Posterior vena cava (tissue), 2 donors: ENCODE measurements at regions of chr1 and their contacts with region 1.

Region 1: DNA sequence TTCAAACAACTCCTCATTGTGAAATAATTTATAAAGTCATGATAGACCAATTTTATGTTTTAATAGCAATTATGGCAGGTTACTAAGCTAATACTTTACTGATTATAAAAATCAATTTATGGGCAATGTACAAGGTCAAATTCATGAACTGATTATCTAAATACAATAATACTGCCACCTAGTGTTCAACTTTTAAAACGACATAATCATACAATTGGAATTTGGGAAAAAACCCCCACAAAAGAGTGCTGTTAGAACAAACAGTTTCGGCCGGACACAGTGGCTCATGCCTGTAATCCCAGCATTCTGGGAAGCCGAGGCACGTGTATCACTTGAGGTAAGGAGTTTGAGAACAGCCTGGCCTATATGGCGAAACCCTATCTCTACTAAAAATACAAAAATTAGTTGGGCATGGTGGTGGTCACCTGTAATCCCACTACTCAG is 14.0 kb downstream of the GTF2B start:
- DNase-seq: no peak

Region 2: GRCh38 chr1:88189526-88189925 is 687.9 kb before region 1 on chr1:
- intact Hi-C with region 1: loop called in 1 of 2 experiments (anchors 5 kb)
- DNase-seq: no peak

Region 3: DNA sequence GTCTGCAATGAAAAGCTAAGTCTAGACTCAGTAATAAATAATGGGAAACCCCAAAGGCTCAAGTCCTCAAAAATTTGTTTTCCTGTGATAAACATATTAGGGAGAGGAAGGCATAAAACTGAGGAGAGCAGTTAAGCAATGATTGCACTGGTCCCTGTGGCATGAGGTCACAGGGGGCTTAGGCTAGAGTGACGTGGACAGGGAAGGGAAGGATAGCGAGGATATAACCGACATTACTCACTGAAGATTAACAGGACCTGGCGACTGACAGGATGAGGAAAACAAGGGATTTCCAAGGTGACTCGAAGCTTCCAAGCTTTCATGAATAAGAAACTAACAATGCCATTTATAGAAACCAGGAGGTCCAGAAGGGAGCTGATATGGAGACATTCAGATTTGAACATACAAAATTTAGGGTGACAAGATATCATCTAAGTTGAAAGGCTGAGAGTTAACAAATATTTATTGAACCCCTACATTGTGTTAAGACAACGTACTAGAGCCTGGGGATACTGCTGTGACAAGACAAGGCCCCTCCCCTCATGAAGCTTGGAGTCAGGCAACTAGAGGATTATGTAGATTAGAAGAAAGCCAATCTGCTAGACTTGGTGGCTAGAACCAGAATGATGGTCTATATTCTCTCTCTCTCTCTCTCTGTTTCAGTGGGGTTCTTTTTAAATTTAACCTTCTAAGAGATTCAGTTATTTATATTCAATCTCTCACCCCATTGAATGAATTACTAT is 226.6 kb before region 1 on chr1:
- intact Hi-C with region 1: loop called in 1 of 2 experiments (anchors 5 kb)
- DNase-seq: no peak

Region 4: DNA sequence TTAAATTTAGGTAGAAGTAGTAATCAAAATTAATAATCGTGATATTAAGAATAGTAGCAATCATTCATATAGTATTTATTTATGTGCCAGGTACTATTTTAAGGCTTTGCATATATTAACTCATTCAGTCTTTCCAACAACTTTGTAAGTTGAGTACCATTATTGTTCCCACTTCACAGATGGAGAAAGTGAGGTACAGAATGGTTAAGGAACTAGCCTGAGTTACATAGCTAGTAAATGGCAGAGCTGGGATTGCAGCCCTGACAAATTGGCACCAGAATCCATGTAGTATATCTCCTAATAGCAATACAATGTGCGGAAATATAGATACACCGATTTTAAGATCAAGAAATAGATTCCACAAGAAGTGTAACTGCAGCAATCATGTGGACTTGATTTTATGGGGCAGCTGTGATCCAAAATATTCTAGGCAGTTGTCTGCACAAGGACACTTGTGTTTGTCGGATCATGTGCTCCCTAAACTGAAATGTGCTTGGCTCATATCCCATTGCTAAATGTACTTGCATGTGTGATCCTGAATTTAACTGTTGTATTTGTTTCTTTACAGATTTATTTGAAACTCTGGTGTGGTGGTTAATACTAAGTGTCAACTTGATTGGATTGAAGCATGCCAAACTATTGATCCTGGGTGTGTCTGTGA is 19.8 kb after region 1 on chr1:
- intact Hi-C with region 1: no loop called
- DNase-seq: no peak

Region 5: DNA sequence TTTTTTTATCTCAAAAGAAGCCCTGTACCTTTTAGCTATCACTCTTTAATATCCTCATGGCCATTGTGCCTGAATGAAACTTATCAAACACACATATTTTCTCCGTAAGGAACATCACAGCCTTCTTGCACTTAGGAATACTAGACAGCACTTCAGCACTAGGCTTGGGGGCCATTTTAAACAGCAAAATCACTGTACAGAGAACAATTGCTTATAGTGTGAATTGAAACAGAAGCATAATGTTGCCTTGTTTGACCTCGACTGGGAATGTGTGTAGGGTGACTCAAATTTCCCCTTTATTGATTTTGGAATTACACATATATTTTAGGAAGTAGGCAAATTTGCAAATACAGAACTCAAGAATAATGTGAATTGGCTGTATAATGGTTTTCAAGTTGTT is 78.6 kb after region 1 on chr1:
- intact Hi-C with region 1: no loop called
- DNase-seq: no peak